CD4-positive, alpha-beta T cell (primary cell): ENCODE measurements at regions of chr3 and their contacts with region 1.

Region 1: DNA sequence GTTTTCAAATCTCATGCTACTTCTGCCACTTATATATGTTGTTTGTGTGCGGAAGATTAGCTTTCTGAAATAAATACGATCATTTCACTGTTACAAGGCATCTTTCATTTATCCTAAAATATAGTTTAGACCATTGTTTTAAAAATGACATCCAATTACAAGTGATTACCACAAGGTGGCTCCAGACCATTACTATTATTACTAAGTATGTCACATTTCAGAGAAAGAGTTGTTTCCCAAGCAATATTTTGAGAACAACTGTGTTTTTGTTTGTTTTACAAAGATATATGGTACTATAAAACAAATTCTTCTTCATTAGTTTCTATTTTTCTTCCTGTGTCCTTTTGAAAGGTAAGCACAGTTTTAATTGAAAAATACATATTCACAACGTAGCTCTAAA is 136.0 kb upstream of the RAP2B start:
- DNase-seq: peak in 3 of 14 experiments; percentile 37 to 56 (median 49)
- ATAC-seq: no peak
- H3K4me3 ChIP-seq: no peak overlapping the region
- H3K4me3 Mint-ChIP-seq: no peak overlapping the region
- H3K27ac ChIP-seq: no peak overlapping the region
- H3K27ac Mint-ChIP-seq: no peak overlapping the region
- H3K4me1 ChIP-seq: no peaks in the 10 kb centered on the region
- H3K4me1 Mint-ChIP-seq: no peaks in the 10 kb centered on the region
- H3K27me3 ChIP-seq: peaks cover under 1 to 5% of the 10 kb centered on the region in 2 experiments
- H3K27me3 Mint-ChIP-seq: peaks cover 13% of the 10 kb centered on the region
- CTCF ChIP-seq: peak; percentile 80

Region 2: GRCh38 chr3:153595186-153595815 is 569.3 kb after region 1 on chr3:
- CTCF ChIA-PET with region 1: no interaction called
- POLR2A ChIA-PET with region 1: no interaction called
- intact Hi-C with region 1: loop called (anchors 1 to 5 kb)
- DNase-seq: peak in 3 of 14 experiments; percentile 35 to 40 (median 38)
- ATAC-seq: no peak
- H3K4me3 ChIP-seq: no peak overlapping the region
- H3K4me3 Mint-ChIP-seq: no peak overlapping the region
- H3K27ac ChIP-seq: no peak overlapping the region
- H3K27ac Mint-ChIP-seq: no peak overlapping the region
- H3K4me1 ChIP-seq: no peaks in the 10 kb centered on the region
- H3K4me1 Mint-ChIP-seq: peaks cover 10% of the 10 kb centered on the region
- H3K27me3 ChIP-seq: no peaks in the 10 kb centered on the region
- H3K27me3 Mint-ChIP-seq: no peaks in the 10 kb centered on the region
- CTCF ChIP-seq: peak; percentile 65

Region 3: GRCh38 chr3:153768561-153769469 is 742.8 kb after region 1 on chr3:
- CTCF ChIA-PET with region 1: interaction called, 8 read pairs
- POLR2A ChIA-PET with region 1: no interaction called
- intact Hi-C with region 1: loop called (anchors 1 to 5 kb)
- DNase-seq: peak; percentile 9 to 77 (median 34)
- ATAC-seq: peak; percentile 98
- H3K4me3 ChIP-seq: no peak overlapping the region
- H3K4me3 Mint-ChIP-seq: no peak overlapping the region
- H3K27ac ChIP-seq: no peak overlapping the region
- H3K27ac Mint-ChIP-seq: no peak overlapping the region
- H3K4me1 ChIP-seq: peaks cover 5% of the 10 kb centered on the region
- H3K4me1 Mint-ChIP-seq: no peaks in the 10 kb centered on the region
- H3K27me3 ChIP-seq: no peaks in the 10 kb centered on the region
- H3K27me3 Mint-ChIP-seq: peaks cover 9% of the 10 kb centered on the region
- CTCF ChIP-seq: peak; percentile 89

Region 4: DNA sequence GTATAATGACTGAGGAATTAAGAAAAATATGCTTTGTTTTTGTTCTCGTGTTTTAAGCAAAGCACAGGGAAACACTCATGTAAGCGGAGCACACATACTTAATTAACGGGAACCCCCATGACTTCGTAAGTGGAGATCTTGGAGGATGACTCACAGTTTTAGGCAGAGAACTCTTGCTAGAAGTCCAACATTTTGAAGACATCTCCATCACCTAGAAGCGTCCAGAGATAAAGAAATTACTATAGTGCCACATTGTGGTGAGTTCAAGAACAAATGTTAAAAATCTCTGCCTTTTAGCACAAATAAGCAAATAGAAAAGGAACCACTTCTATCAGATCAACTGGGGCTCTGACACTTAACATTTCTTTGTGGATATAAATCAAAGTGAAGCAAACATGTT is 901.1 kb after region 1 on chr3:
- CTCF ChIA-PET with region 1: no interaction called
- POLR2A ChIA-PET with region 1: no interaction called
- intact Hi-C with region 1: loop called in 1 of 2 experiments (anchors 10 kb)
- DNase-seq: no peak
- ATAC-seq: no peak
- H3K4me3 ChIP-seq: no peak overlapping the region
- H3K4me3 Mint-ChIP-seq: no peak overlapping the region
- H3K27ac ChIP-seq: no peak overlapping the region
- H3K27ac Mint-ChIP-seq: no peak overlapping the region
- H3K4me1 ChIP-seq: no peaks in the 10 kb centered on the region
- H3K4me1 Mint-ChIP-seq: no peaks in the 10 kb centered on the region
- H3K27me3 ChIP-seq: no peaks in the 10 kb centered on the region
- H3K27me3 Mint-ChIP-seq: peaks cover 4% of the 10 kb centered on the region
- CTCF ChIP-seq: no peak

Region 5: DNA sequence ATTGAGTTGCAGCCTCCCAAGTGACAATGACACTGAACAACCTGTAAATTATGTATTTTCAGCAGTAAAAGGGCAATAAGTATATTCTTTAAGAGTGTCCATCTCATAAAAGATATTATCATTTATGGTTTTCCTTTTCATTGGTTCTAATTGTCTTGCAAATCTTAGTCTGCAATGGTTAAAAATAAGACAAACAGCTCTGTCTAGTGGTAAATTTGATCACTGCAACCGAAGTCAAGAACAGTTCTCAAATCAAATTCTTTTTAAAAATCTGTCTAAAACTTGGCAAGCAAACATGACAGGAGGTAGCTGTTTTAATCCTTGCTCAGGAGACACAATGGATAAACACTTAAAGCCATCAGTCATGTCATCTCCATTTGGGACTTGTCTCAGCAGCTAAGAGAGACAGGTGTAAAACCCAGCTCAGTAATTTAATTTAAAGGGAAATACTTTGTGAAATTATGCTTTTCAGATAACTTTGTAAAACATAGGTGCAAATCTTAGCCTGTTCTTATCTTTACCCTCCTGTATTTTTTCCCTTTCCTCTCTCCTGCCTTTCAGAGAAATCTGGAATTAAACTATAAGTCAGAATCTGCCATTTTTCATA is 944.8 kb after region 1 on chr3:
- CTCF ChIA-PET with region 1: no interaction called
- POLR2A ChIA-PET with region 1: no interaction called
- intact Hi-C with region 1: loop called in 1 of 2 experiments (anchors 5 kb)
- DNase-seq: peak in 1 of 14 experiments; percentile 0
- ATAC-seq: no peak
- H3K4me3 ChIP-seq: no peak overlapping the region
- H3K4me3 Mint-ChIP-seq: no peak overlapping the region
- H3K27ac ChIP-seq: no peak overlapping the region
- H3K27ac Mint-ChIP-seq: no peak overlapping the region
- H3K4me1 ChIP-seq: no peaks in the 10 kb centered on the region
- H3K4me1 Mint-ChIP-seq: no peaks in the 10 kb centered on the region
- H3K27me3 ChIP-seq: no peaks in the 10 kb centered on the region
- H3K27me3 Mint-ChIP-seq: peaks cover 26% of the 10 kb centered on the region
- CTCF ChIP-seq: no peak

Region 6: DNA sequence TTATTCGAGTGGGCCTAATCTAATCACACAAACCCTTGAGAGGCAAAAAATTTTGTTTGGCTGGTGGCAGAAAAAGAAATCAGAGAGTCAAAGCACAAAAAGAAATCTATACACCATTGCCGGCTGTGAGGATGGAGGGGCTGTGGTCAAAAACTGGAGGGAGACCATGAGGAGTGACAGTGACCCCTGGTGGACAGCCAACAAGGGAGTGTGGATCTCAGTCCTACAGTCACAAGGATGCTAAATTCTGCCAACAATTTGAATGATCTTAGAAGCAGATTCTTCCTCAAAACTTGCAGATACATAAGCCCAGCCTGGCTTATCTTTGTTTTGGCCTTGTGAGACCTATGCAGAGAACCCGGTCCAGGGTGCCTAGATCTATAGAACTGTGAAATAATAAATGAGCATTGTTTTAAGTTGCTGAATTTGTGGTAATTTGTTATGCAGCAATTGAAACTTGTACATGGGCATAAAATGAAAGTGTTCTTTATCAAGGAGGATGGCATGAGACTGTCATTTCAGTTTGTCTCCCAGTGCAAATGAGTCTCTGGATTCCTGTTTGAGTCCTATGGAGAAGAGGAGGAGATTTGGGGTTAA is 992.2 kb after region 1 on chr3:
- CTCF ChIA-PET with region 1: no interaction called
- POLR2A ChIA-PET with region 1: no interaction called
- intact Hi-C with region 1: loop called (anchors 5 kb)
- DNase-seq: peak in 11 of 14 experiments; percentile 1 to 49 (median 6)
- ATAC-seq: no peak
- H3K4me3 ChIP-seq: no peak overlapping the region
- H3K4me3 Mint-ChIP-seq: no peak overlapping the region
- H3K27ac ChIP-seq: no peak overlapping the region
- H3K27ac Mint-ChIP-seq: no peak overlapping the region
- H3K4me1 ChIP-seq: no peaks in the 10 kb centered on the region
- H3K4me1 Mint-ChIP-seq: no peaks in the 10 kb centered on the region
- H3K27me3 ChIP-seq: no peaks in the 10 kb centered on the region
- H3K27me3 Mint-ChIP-seq: no peaks in the 10 kb centered on the region
- CTCF ChIP-seq: peak; percentile 34

Region 7: DNA sequence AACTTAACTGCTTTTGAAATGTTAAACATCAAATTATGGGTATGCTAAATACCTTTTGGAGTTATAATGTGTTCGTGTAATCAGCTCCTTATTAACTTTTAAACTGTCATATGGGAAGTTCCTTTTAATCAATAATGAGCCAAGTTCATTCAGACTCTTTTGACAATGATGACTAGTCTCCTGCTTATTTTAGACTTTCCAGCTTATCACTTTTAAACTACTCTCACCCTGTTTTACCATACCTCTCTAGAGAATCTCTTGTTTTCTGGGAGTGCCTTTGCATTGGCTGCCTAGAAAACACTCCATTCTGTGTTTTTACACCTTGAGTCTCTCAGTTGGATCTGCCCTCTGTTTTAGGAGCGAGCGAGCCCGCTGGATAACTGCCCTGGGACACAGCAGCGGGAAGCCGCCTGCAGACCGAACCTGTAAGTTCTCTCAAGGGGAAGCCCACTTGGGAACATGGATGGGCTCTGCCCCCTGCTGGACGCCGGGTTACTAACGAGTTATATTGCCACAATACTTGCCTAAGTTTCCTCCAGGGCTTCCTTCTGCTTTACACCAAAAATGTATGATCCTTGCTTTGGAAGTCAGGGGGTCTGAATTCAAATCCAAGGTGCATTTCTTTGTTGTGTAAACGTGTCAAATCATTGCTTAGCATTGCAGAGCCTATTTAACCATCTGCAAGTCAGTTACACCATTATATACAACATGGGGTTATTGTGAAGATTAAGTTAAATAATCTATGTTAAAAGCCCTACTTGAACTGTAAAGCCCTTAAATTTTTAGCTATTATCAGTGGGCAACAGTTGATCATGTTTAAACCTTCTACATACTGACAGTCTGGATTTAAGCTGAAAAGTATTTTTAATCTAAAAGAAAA is 1227.0 kb after region 1 on chr3:
- CTCF ChIA-PET with region 1: no interaction called
- POLR2A ChIA-PET with region 1: no interaction called
- intact Hi-C with region 1: loop called in 1 of 2 experiments (anchors 5 kb)
- DNase-seq: peak; percentile 43 to 75 (median 55)
- ATAC-seq: peak; percentile 63
- H3K4me3 ChIP-seq: no peak overlapping the region
- H3K4me3 Mint-ChIP-seq: no peak overlapping the region
- H3K27ac ChIP-seq: no peak overlapping the region
- H3K27ac Mint-ChIP-seq: no peak overlapping the region
- H3K4me1 ChIP-seq: no peaks in the 10 kb centered on the region
- H3K4me1 Mint-ChIP-seq: no peaks in the 10 kb centered on the region
- H3K27me3 ChIP-seq: no peaks in the 10 kb centered on the region
- H3K27me3 Mint-ChIP-seq: no peaks in the 10 kb centered on the region
- CTCF ChIP-seq: peak; percentile 75

Region 8: DNA sequence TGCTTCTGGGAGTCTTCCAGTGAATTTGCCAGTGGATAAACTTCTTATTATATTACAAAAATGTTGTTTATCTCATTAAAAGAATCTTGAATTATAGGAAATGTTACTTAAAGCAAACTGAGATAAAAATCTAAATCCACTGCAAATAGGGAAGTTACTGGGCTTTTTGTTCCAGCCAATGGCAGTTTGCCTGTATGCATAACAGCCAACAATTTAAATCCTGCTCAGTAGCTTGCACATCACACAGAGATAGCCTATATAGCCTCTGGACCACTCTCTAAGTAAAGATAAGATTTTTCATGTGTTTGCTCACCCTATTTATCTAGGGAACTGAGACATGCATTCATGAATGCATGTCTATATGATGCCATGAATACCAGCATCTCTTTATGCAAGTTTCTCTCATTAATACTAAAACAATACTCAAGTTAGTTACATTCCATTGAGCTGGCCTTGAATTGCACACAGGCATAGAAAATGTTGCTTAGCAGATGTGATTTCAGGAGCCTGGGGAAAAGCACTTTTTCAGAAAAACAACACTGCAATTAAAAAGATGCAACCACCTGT is 1496.1 kb after region 1 on chr3:
- CTCF ChIA-PET with region 1: no interaction called
- POLR2A ChIA-PET with region 1: no interaction called
- intact Hi-C with region 1: no loop called
- DNase-seq: no peak
- ATAC-seq: no peak
- H3K4me3 ChIP-seq: no peak overlapping the region
- H3K4me3 Mint-ChIP-seq: no peak overlapping the region
- H3K27ac ChIP-seq: no peak overlapping the region
- H3K27ac Mint-ChIP-seq: no peak overlapping the region
- H3K4me1 ChIP-seq: no peaks in the 10 kb centered on the region
- H3K4me1 Mint-ChIP-seq: no peaks in the 10 kb centered on the region
- H3K27me3 ChIP-seq: no peaks in the 10 kb centered on the region
- H3K27me3 Mint-ChIP-seq: no peaks in the 10 kb centered on the region
- CTCF ChIP-seq: no peak